ENCODE measurements at regions of chr3 and their contacts with region 1.

Region 1: DNA sequence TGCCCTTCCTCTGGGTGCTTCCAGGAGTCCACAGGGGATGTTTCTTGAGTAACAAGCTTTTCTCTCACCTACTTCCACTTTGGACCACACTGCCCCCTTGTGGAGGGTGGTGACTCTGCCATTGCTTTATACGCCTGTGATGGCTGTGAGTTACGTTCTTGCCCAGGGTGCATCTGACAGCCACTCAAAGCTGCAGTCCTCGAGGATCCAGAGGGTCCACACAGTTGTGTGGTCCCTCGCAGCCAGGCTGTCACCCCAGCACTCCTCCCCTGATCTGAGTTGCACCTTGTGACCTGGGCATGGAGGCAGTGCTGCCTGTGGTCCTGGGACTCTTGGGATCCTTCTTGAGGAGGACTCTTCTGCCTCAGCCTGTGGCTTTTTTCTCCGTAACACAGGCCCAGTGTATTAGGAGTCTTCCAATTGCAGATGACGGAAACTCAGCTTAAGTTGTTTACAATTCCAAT is 23.4 kb downstream of the FOXL2 start:
- DNase-seq: peak; percentile 74
- H3K4me3 Mint-ChIP-seq: no peak overlapping the region
- H3K27ac Mint-ChIP-seq: no peak overlapping the region
- H3K4me1 Mint-ChIP-seq: peaks cover 4% of the 10 kb centered on the region
- H3K27me3 Mint-ChIP-seq: peaks cover 16% of the 10 kb centered on the region

Region 2: DNA sequence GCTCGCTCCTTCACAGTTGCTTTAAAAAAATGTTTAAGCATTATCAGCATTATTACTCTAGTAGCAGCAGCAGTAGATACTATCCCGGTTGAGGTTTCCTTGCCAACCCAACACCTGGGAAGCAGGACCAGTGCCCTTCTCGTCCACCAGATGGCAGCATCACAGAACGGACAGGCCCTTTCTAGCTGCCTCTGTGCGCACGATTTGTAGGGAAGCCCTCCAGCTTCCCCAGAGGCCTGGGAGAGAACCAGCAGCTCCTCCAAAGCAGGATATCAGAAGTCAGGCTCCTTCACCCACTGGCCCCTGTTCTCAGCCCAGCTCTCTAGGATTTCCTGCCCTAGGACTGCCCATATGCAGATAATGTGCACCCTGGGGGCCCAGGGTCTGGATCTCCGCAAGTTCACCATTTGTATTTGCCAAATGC is 506.0 kb before region 1 on chr3:
- intact Hi-C with region 1: loop called (anchors 1 kb)
- DNase-seq: peak; percentile 42
- H3K4me3 Mint-ChIP-seq: no peak overlapping the region
- H3K27ac Mint-ChIP-seq: no peak overlapping the region
- H3K4me1 Mint-ChIP-seq: no peaks in the 10 kb centered on the region
- H3K27me3 Mint-ChIP-seq: peaks cover 13% of the 10 kb centered on the region

Region 3: DNA sequence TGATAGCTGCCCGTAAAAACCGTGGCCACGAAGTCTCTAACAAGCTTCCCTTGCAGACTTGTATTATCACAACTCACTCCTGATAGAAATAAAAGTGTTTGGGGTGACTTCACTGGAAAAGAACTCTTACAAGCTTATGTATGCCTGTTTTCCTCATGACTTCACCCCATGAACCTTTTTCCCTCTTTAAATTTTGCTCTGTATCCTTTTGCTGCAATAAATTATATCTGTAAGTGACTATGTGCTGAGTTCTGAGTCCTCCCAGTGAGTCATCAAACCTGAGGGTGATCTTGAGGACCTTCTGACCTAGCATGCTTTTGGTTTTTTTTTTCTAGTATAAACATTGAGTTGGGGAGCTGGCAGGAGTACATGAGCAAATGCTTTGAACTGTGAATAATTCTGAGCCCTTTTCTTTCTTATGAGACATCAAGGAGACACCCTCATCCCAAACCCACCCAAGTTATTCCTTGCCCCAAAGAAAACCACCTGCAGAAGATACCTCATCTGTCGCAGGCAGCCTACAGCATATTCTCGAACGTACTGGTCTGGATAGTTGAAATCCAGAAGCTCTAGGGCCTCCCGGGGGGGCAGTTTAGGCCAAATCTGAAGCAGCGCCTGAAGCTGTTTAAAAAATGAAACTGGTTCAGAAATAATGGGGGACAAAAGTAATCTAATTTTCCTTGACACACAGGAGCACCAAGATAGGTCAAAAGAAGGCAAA is 229.1 kb before region 1 on chr3:
- intact Hi-C with region 1: loop called (anchors 1 kb)
- DNase-seq: no peak
- H3K4me3 Mint-ChIP-seq: no peak overlapping the region
- H3K27ac Mint-ChIP-seq: no peak overlapping the region
- H3K4me1 Mint-ChIP-seq: no peaks in the 10 kb centered on the region
- H3K27me3 Mint-ChIP-seq: no peaks in the 10 kb centered on the region

Measured in activated T-helper 1 cell treated with anti-CD3 and anti-CD28 coated beads, Interleukin-12 subunit alpha, Interleukin-12 subunit beta, Interleukin-2, Interleukin-4 antibody, amounts not matched to agents 30 ng/mL and 10 ng/mL and 1 ng/mL, durations not matched to agents 14 hours and 24 hours and 36 hours (primary cell).